CD4-positive, alpha-beta T cell (primary cell): ENCODE measurements at regions of chr7 and their contacts with region 1.

Region 1: GRCh38 chr7:32506266-32507054 is 11.2 kb downstream of the AVL9 start:
- DNase-seq: peak in 2 of 14 experiments; percentile 6 to 25
- ATAC-seq: no peak
- H3K4me3 ChIP-seq: no peak overlapping the region
- H3K4me3 Mint-ChIP-seq: no peak overlapping the region
- H3K27ac ChIP-seq: no peak overlapping the region
- H3K27ac Mint-ChIP-seq: no peak overlapping the region
- H3K4me1 ChIP-seq: peaks cover 22% of the 10 kb centered on the region
- H3K4me1 Mint-ChIP-seq: peaks cover 66% of the 10 kb centered on the region
- H3K27me3 ChIP-seq: no peaks in the 10 kb centered on the region
- H3K27me3 Mint-ChIP-seq: no peaks in the 10 kb centered on the region
- CTCF ChIP-seq: no peak

Region 2: GRCh38 chr7:32539919-32540531 is 33.6 kb after region 1 on chr7:
- CTCF ChIA-PET with region 1: no interaction called
- POLR2A ChIA-PET with region 1: no interaction called
- intact Hi-C with region 1: loop called (anchors 5 kb)
- DNase-seq: no peak
- ATAC-seq: no peak
- H3K4me3 ChIP-seq: no peak overlapping the region
- H3K4me3 Mint-ChIP-seq: no peak overlapping the region
- H3K27ac ChIP-seq: no peak overlapping the region
- H3K27ac Mint-ChIP-seq: no peak overlapping the region
- H3K4me1 ChIP-seq: no peaks in the 10 kb centered on the region
- H3K4me1 Mint-ChIP-seq: peaks cover 41% of the 10 kb centered on the region
- H3K27me3 ChIP-seq: no peaks in the 10 kb centered on the region
- H3K27me3 Mint-ChIP-seq: no peaks in the 10 kb centered on the region
- CTCF ChIP-seq: no peak